ENCODE measurements at regions of chr2 and their contacts with region 1.

Region 1: GRCh38 chr2:28821295-28821958 is 10.8 kb downstream of the SPDYA start:
- DNase-seq: peak; percentile 50
- CTCF ChIP-seq: peak; percentile 65

Region 2: DNA sequence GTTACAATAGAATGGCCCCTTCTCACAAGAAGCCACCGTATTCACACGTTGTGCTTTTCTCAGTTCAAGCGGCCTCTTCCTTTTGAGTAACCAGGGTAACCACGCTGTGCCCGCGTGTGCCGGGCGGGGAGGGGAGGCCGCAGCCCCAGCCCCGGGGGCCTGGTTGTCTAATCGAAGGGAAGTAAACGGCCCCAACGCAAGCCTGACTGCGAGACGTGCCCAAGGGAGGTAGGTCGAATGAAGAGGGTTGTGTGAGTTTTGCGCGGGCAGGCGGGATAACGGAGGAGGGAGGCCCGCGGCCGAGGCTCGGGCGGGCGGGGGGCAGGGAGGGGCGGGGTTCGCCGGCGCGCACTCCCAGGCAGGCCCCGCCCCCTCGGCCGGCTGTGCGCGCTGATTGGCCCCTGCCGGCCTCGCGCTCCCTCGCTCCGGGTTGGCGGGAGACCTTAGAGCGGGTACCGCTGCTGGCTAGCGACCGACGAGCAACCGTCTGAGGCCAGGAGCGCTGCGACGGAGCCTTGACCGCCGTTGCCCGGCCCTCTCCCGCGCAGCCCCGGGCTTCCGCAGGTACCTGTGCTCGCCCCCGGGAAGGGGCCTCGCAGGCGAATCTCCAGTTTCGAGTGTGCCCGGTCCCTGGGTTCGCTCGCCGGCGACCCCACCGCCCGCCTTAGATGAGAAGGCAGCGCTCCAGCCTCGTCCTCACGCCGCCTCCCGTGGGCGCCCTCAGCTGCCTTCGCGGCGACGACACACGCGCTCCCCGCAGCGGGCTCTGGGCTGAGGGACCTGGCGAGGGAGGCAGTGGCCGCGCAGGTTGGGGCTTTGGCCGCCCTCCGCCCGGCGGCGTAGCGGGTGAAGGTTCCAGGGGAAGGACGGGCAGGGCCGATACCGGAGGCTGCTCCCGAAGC is 10.8 kb before region 1 on chr2 and contains the start of gene SPDYA:
- CTCF ChIA-PET with region 1: interaction called, 28 read pairs
- POLR2A ChIA-PET with region 1: no interaction called
- DNase-seq: peak; percentile 90
- CTCF ChIP-seq: no peak

Region 3: GRCh38 chr2:28835781-28836180 is 14.4 kb after region 1 on chr2:
- CTCF ChIA-PET with region 1: interaction called, 15 read pairs
- POLR2A ChIA-PET with region 1: no interaction called
- DNase-seq: no peak
- CTCF ChIP-seq: no peak

Measured in GM10248 (cell line).